Naive thymus-derived CD4-positive, alpha-beta T cell (primary cell): ENCODE measurements at regions of chr18 and their contacts with region 1.

Region 1: GRCh38 chr18:11937874-11938478 is 29.9 kb upstream of the MPPE1 start:
- DNase-seq: peak; percentile 42 to 79 (median 65)
- ATAC-seq: peak; percentile 83
- H3K4me3 ChIP-seq: no peak overlapping the region
- H3K4me3 Mint-ChIP-seq: no peak overlapping the region
- H3K27ac ChIP-seq: no peak overlapping the region
- H3K27ac Mint-ChIP-seq: no peak overlapping the region
- H3K4me1 ChIP-seq: no peaks in the 10 kb centered on the region
- H3K4me1 Mint-ChIP-seq: peaks cover 0 to 8% (median 0%) of the 10 kb centered on the region in 7 donors
- H3K27me3 ChIP-seq: no peaks in the 10 kb centered on the region
- H3K27me3 Mint-ChIP-seq: peaks cover 0 to 6% (median 0%) of the 10 kb centered on the region in 5 donors

Region 2: GRCh38 chr18:11343096-11343495 is 594.9 kb before region 1 on chr18:
- CTCF ChIA-PET with region 1: no interaction called
- POLR2A ChIA-PET with region 1: no interaction called
- intact Hi-C with region 1: no loop called
- DNase-seq: no peak
- ATAC-seq: no peak
- H3K4me3 ChIP-seq: no peak overlapping the region
- H3K4me3 Mint-ChIP-seq: no peak overlapping the region
- H3K27ac ChIP-seq: no peak overlapping the region
- H3K27ac Mint-ChIP-seq: no peak overlapping the region
- H3K4me1 ChIP-seq: no peaks in the 10 kb centered on the region
- H3K4me1 Mint-ChIP-seq: no peaks in the 10 kb centered on the region
- H3K27me3 ChIP-seq: no peaks in the 10 kb centered on the region
- H3K27me3 Mint-ChIP-seq: peaks cover 0 to 10% (median 0%) of the 10 kb centered on the region in 5 donors

Region 3: DNA sequence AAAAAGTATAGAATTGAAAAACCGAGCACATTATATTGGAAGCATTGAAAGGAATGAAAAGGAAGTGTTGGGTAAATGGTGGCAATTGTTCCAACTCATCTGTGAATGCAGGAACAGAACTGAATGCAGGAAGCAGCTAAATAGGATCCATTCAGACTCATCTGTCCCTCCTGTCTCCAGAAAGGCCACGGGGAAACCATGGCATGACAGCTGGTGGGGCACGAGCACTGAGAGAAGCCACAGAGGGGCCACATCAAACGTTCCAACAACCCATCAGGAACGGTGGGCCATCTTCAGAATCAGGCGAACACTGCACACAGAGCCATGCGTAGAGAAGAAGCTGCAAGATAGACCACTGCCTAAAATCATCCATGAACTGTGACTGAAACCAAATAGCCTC is 467.0 kb before region 1 on chr18:
- CTCF ChIA-PET with region 1: no interaction called
- POLR2A ChIA-PET with region 1: no interaction called
- intact Hi-C with region 1: no loop called
- DNase-seq: no peak
- ATAC-seq: no peak
- H3K4me3 ChIP-seq: no peak overlapping the region
- H3K4me3 Mint-ChIP-seq: no peak overlapping the region
- H3K27ac ChIP-seq: no peak overlapping the region
- H3K27ac Mint-ChIP-seq: no peak overlapping the region
- H3K4me1 ChIP-seq: no peaks in the 10 kb centered on the region
- H3K4me1 Mint-ChIP-seq: peaks cover 0 to 2% (median 0%) of the 10 kb centered on the region in 7 donors
- H3K27me3 ChIP-seq: no peaks in the 10 kb centered on the region
- H3K27me3 Mint-ChIP-seq: peaks cover 0 to 5% (median 2%) of the 10 kb centered on the region in 5 donors

Region 4: GRCh38 chr18:11963991-11964484 is 26.1 kb after region 1 on chr18:
- CTCF ChIA-PET with region 1: no interaction called
- POLR2A ChIA-PET with region 1: no interaction called
- intact Hi-C with region 1: loop called in 1 of 2 experiments (anchors 2 kb)
- DNase-seq: no peak
- ATAC-seq: no peak
- H3K4me3 ChIP-seq: no peak overlapping the region
- H3K4me3 Mint-ChIP-seq: no peak overlapping the region
- H3K27ac ChIP-seq: no peak overlapping the region
- H3K27ac Mint-ChIP-seq: peak overlapping the region in 1 of 9 donors; percentile 59
- H3K4me1 ChIP-seq: no peaks in the 10 kb centered on the region
- H3K4me1 Mint-ChIP-seq: no peaks in the 10 kb centered on the region
- H3K27me3 ChIP-seq: no peaks in the 10 kb centered on the region
- H3K27me3 Mint-ChIP-seq: peaks cover 0 to 5% (median 4%) of the 10 kb centered on the region in 5 donors

Region 5: GRCh38 chr18:11995445-11996189 is 57.6 kb after region 1 on chr18:
- CTCF ChIA-PET with region 1: interaction called, 162 read pairs
- POLR2A ChIA-PET with region 1: interaction called, 3 read pairs
- intact Hi-C with region 1: loop called (anchors 1 kb)
- DNase-seq: peak; percentile 19 to 61 (median 50)
- ATAC-seq: peak; percentile 92
- H3K4me3 ChIP-seq: peak overlapping the region; percentile 3
- H3K4me3 Mint-ChIP-seq: peak overlapping the region; percentile 4 to 74 (median 58)
- H3K27ac ChIP-seq: no peak overlapping the region
- H3K27ac Mint-ChIP-seq: peak overlapping the region in 6 of 9 donors; percentile 4 to 79 (median 52)
- H3K4me1 ChIP-seq: peaks cover 0 to 6% of the 10 kb centered on the region in 2 donors
- H3K4me1 Mint-ChIP-seq: peaks cover 9 to 21% (median 14%) of the 10 kb centered on the region in 7 donors
- H3K27me3 ChIP-seq: no peaks in the 10 kb centered on the region
- H3K27me3 Mint-ChIP-seq: no peaks in the 10 kb centered on the region

Region 6: DNA sequence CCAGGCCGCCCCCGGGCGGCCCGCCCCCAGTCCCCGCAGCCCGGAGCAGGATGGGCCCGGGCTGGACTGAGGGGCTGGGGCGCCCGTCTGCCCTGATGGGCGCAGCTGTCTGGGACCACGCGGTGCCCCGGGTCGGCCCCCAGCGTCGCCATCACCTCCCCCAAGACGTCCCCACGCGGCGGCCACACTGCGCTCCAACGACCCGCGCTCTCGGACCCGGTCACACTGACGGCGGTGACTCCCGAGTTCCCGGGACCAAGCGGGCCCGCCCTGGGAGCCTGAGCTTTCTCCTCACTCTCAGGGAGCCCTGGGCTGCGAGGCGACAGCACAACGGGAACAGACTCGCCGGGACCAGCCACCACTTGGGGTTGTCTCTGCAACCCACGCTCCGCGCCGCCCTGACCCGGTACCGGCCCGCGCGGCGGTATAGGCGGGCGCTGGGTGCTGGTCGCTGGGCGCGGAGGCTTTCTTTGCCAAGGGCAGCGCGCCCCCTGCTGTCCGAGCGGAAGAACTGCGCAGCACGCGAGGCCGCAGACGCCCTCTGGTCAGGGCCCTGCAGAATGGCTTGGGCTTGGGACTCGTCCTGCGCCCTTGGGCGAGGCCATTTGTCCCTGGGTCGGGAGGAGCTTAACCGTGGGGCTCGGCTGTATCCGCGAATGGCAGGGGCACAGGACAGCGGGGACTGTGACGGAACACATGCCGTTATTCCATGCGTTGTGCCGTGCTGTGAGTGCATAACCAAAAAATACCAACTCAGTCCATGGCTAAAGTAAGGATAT is 100.9 kb after region 1 on chr18:
- CTCF ChIA-PET with region 1: interaction called, 47 read pairs
- POLR2A ChIA-PET with region 1: no interaction called
- intact Hi-C with region 1: loop called (anchors 1 kb)
- DNase-seq: peak; percentile 41 to 84 (median 68)
- ATAC-seq: peak; percentile 95
- H3K4me3 ChIP-seq: peak overlapping the region; percentile 52
- H3K4me3 Mint-ChIP-seq: peak overlapping the region; percentile 59 to 79 (median 72)
- H3K27ac ChIP-seq: no peak overlapping the region
- H3K27ac Mint-ChIP-seq: no peak overlapping the region
- H3K4me1 ChIP-seq: no peaks in the 10 kb centered on the region
- H3K4me1 Mint-ChIP-seq: peaks cover 0 to 19% (median 0%) of the 10 kb centered on the region in 7 donors
- H3K27me3 ChIP-seq: peaks cover 0 to 3% of the 10 kb centered on the region in 2 donors
- H3K27me3 Mint-ChIP-seq: peaks cover 10 to 21% (median 14%) of the 10 kb centered on the region in 5 donors